Naive thymus-derived CD4-positive, alpha-beta T cell (primary cell): ENCODE measurements at regions of chr13 and their contacts with region 1.

Region 1: GRCh38 chr13:51435002-51435578 is 17.7 kb downstream of the INTS6 start:
- DNase-seq: peak in 6 of 9 donors; percentile 19 to 50 (median 33)
- ATAC-seq: peak; percentile 47
- H3K4me3 ChIP-seq: no peak overlapping the region
- H3K4me3 Mint-ChIP-seq: no peak overlapping the region
- H3K27ac ChIP-seq: no peak overlapping the region
- H3K27ac Mint-ChIP-seq: peak overlapping the region in 1 of 9 donors; percentile 61
- H3K4me1 ChIP-seq: no peaks in the 10 kb centered on the region
- H3K4me1 Mint-ChIP-seq: peaks cover 8 to 47% (median 25%) of the 10 kb centered on the region in 7 donors
- H3K27me3 ChIP-seq: no peaks in the 10 kb centered on the region
- H3K27me3 Mint-ChIP-seq: no peaks in the 10 kb centered on the region

Region 2: GRCh38 chr13:50512474-50513299 is 922.4 kb before region 1 on chr13:
- CTCF ChIA-PET with region 1: no interaction called
- POLR2A ChIA-PET with region 1: no interaction called
- intact Hi-C with region 1: no loop called
- DNase-seq: peak in 7 of 9 donors; percentile 11 to 41 (median 27)
- ATAC-seq: peak; percentile 76
- H3K4me3 ChIP-seq: peak overlapping the region; percentile 22
- H3K4me3 Mint-ChIP-seq: no peak overlapping the region
- H3K27ac ChIP-seq: peak overlapping the region; percentile 34
- H3K27ac Mint-ChIP-seq: no peak overlapping the region
- H3K4me1 ChIP-seq: peaks cover 15 to 16% of the 10 kb centered on the region in 2 donors
- H3K4me1 Mint-ChIP-seq: peaks cover 0 to 3% (median 0%) of the 10 kb centered on the region in 7 donors
- H3K27me3 ChIP-seq: no peaks in the 10 kb centered on the region
- H3K27me3 Mint-ChIP-seq: peaks cover 0 to 13% (median 0%) of the 10 kb centered on the region in 5 donors

Region 3: DNA sequence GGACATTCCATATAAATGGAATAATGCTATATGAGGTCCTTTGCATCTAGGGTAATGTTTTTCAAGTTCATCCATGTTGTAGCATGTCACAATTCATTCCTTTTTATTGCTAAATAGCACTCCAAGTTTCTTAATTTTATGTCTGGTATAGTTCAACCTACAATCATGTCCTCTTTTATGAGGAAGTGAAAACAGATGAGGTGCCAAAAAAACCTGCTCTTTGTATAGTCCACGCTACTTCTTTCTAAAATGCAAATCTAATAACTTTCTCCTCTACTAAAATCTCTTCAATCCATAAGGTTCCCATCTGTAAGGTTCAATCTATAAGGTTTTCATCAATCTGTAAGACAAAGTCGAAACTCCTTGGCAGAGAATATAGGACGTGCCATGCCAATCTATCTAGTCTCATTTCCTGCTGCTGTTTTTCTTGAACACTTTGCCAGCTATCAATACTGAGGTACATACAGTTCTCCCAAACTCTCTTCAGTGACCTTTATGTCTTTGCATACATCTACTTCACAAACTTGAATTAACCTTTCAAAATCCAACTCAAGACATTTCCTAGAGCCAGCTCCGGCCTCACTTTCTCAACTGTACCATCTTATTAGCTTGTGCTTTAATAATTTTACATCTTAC is 16.0 kb before region 1 on chr13:
- CTCF ChIA-PET with region 1: interaction called, 5 read pairs
- POLR2A ChIA-PET with region 1: no interaction called
- intact Hi-C with region 1: loop called in 1 of 2 experiments (anchors 1 kb)
- DNase-seq: no peak
- ATAC-seq: no peak
- H3K4me3 ChIP-seq: no peak overlapping the region
- H3K4me3 Mint-ChIP-seq: peak overlapping the region in 8 of 10 donors; percentile 5 to 70 (median 62)
- H3K27ac ChIP-seq: no peak overlapping the region
- H3K27ac Mint-ChIP-seq: peak overlapping the region; percentile 2 to 75 (median 65)
- H3K4me1 ChIP-seq: peaks cover 17 to 44% of the 10 kb centered on the region in 2 donors
- H3K4me1 Mint-ChIP-seq: peaks cover 50 to 90% (median 82%) of the 10 kb centered on the region in 7 donors
- H3K27me3 ChIP-seq: no peaks in the 10 kb centered on the region
- H3K27me3 Mint-ChIP-seq: no peaks in the 10 kb centered on the region

Region 4: GRCh38 chr13:51488212-51488611 is 53.1 kb after region 1 on chr13:
- CTCF ChIA-PET with region 1: no interaction called
- POLR2A ChIA-PET with region 1: no interaction called
- intact Hi-C with region 1: no loop called
- DNase-seq: no peak
- ATAC-seq: no peak
- H3K4me3 ChIP-seq: no peak overlapping the region
- H3K4me3 Mint-ChIP-seq: no peak overlapping the region
- H3K27ac ChIP-seq: no peak overlapping the region
- H3K27ac Mint-ChIP-seq: no peak overlapping the region
- H3K4me1 ChIP-seq: no peaks in the 10 kb centered on the region
- H3K4me1 Mint-ChIP-seq: no peaks in the 10 kb centered on the region
- H3K27me3 ChIP-seq: no peaks in the 10 kb centered on the region
- H3K27me3 Mint-ChIP-seq: peaks cover 0 to 3% (median 0%) of the 10 kb centered on the region in 5 donors

Region 5: GRCh38 chr13:51619614-51620013 is 184.5 kb after region 1 on chr13:
- CTCF ChIA-PET with region 1: no interaction called
- POLR2A ChIA-PET with region 1: no interaction called
- intact Hi-C with region 1: no loop called
- DNase-seq: no peak
- ATAC-seq: no peak
- H3K4me3 ChIP-seq: no peak overlapping the region
- H3K4me3 Mint-ChIP-seq: no peak overlapping the region
- H3K27ac ChIP-seq: no peak overlapping the region
- H3K27ac Mint-ChIP-seq: no peak overlapping the region
- H3K4me1 ChIP-seq: no peaks in the 10 kb centered on the region
- H3K4me1 Mint-ChIP-seq: peaks cover 24 to 41% (median 32%) of the 10 kb centered on the region in 7 donors
- H3K27me3 ChIP-seq: no peaks in the 10 kb centered on the region
- H3K27me3 Mint-ChIP-seq: no peaks in the 10 kb centered on the region

Region 6: GRCh38 chr13:51764184-51765141 is 329.4 kb after region 1 on chr13:
- CTCF ChIA-PET with region 1: interaction called, 4 read pairs
- POLR2A ChIA-PET with region 1: interaction called, 3 read pairs
- intact Hi-C with region 1: loop called in 1 of 2 experiments (anchors 1 kb)
- DNase-seq: peak in 8 of 9 donors; percentile 19 to 62 (median 44)
- ATAC-seq: peak; percentile 88
- H3K4me3 ChIP-seq: peak overlapping the region; percentile 49
- H3K4me3 Mint-ChIP-seq: peak overlapping the region; percentile 74 to 90 (median 85)
- H3K27ac ChIP-seq: peak overlapping the region; percentile 68
- H3K27ac Mint-ChIP-seq: peak overlapping the region; percentile 88 to 95 (median 93)
- H3K4me1 ChIP-seq: peaks cover 6 to 15% of the 10 kb centered on the region in 2 donors
- H3K4me1 Mint-ChIP-seq: peaks cover 10 to 38% (median 29%) of the 10 kb centered on the region in 7 donors
- H3K27me3 ChIP-seq: no peaks in the 10 kb centered on the region
- H3K27me3 Mint-ChIP-seq: no peaks in the 10 kb centered on the region

Region 7: GRCh38 chr13:51832471-51833152 is 397.5 kb after region 1 on chr13:
- CTCF ChIA-PET with region 1: interaction called, 5 read pairs
- POLR2A ChIA-PET with region 1: interaction called, 3 read pairs
- intact Hi-C with region 1: loop called in 1 of 2 experiments (anchors 1 kb)
- DNase-seq: peak in 7 of 9 donors; percentile 68 to 82 (median 76)
- ATAC-seq: peak; percentile 98
- H3K4me3 ChIP-seq: no peak overlapping the region
- H3K4me3 Mint-ChIP-seq: peak overlapping the region in 9 of 10 donors; percentile 37 to 77 (median 55)
- H3K27ac ChIP-seq: no peak overlapping the region
- H3K27ac Mint-ChIP-seq: peak overlapping the region in 8 of 9 donors; percentile 68 to 99 (median 78)
- H3K4me1 ChIP-seq: peaks cover 4 to 33% of the 10 kb centered on the region in 2 donors
- H3K4me1 Mint-ChIP-seq: peaks cover 28 to 54% (median 51%) of the 10 kb centered on the region in 7 donors
- H3K27me3 ChIP-seq: no peaks in the 10 kb centered on the region
- H3K27me3 Mint-ChIP-seq: peaks cover 0 to 8% (median 0%) of the 10 kb centered on the region in 5 donors